PC-9 (cell line): ENCODE measurements at regions of chr2 and their contacts with region 1.

Region 1: DNA sequence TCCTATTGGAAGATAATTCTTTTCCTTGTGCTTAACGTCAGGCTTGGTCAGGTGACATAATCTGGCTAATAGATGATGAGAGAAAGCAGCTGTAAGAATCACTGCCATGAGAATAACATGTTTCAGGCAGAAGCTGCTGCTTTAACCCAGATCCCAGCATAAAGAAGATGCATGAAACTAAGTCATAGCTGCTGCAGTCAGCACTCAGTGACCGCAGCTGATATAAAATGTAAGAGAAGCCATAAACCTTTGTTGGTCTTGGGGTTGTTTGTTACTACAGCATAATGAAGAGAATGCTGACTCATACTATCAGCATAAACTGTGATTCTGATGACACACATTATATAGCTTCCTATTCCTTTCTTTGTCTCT is 274.3 kb upstream of the TRIB2 start:
- DNase-seq: no peak
- H3K4me3 ChIP-seq: no peak overlapping the region
- H3K27ac ChIP-seq: no peak overlapping the region
- H3K4me1 ChIP-seq: no peaks in the 10 kb centered on the region
- H3K27me3 ChIP-seq: no peaks in the 10 kb centered on the region
- CTCF ChIP-seq: no peak

Region 2: DNA sequence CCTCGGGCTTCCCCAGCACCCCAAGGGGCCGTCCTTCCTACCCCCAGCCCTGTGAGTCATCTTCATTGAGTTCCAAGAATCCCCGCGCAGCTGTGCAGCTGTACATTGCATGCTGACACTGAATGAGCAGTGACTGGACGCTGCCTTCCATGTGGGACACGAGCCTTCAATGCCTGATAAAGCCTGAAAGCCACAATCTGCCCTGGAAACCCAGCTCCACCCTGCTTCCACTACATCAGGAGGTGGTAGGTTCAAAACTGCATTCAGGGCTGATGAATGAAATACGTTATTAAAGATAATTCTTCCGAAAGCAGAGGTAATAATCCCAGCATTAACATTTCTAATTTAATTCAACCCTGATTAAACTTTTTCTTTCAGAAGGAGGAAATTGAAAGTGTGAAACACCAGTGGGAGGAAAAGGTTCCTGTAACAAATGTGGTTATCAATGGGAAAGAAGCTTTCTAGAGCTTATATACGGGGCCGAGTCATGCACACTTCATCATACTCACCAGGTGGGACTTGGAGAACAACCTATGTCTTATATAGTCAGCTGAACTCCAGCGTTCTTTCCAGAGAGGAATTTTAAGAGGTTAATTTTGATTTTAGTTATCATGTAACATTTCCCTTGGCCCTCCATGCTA is 335.9 kb before region 1 on chr2:
- CTCF ChIA-PET with region 1: no interaction called
- POLR2A ChIA-PET with region 1: interaction called, 13 read pairs
- intact Hi-C with region 1: no loop called
- DNase-seq: peak; percentile 84
- H3K4me3 ChIP-seq: no peak overlapping the region
- H3K27ac ChIP-seq: no peak overlapping the region
- H3K4me1 ChIP-seq: peaks cover 8% of the 10 kb centered on the region; the same call in 1 of the 2 replicates
- H3K27me3 ChIP-seq: no peaks in the 10 kb centered on the region
- CTCF ChIP-seq: no peak